K562 (cell line): ENCODE measurements at regions of chr14 and their contacts with region 1.

Region 1: GRCh38 chr14:31902002-31902401 is 175.1 kb upstream of the ARHGAP5 start:
- DNase-seq: peak; percentile 37 to 69 (median 53)
- ATAC-seq: peak; percentile 87
- H3K4me3 ChIP-seq: no peak overlapping the region
- H3K27ac ChIP-seq: peak overlapping the region; percentile 32; the same call in 2 of the 3 replicates
- H3K4me1 ChIP-seq: peaks cover 0 to 24% of the 10 kb centered on the region in 2 experiments; a peak in 2 of 5 replicates
- H3K27me3 ChIP-seq: no peaks in the 10 kb centered on the region
- CTCF ChIP-seq: no peak
- EP300 ChIP-seq: peak; percentile 49; the same call in 1 of the 2 replicates
- POLR2A ChIP-seq: no peak
- RAD21 ChIP-seq: no peak

Region 2: GRCh38 chr14:31530136-31530535 is 371.9 kb before region 1 on chr14:
- CTCF ChIA-PET with region 1: no interaction called
- POLR2A ChIA-PET with region 1: no interaction called
- in situ Hi-C with region 1: no loop called
- intact Hi-C with region 1: loop called (anchors 10 kb)
- DNase-seq: no peak
- ATAC-seq: no peak
- H3K4me3 ChIP-seq: no peak overlapping the region
- H3K27ac ChIP-seq: no peak overlapping the region
- H3K4me1 ChIP-seq: peaks cover 0 to 6% of the 10 kb centered on the region in 2 experiments; a peak in 2 of 5 replicates
- H3K27me3 ChIP-seq: no peaks in the 10 kb centered on the region; a peak in 1 of 5 replicates
- CTCF ChIP-seq: no peak
- EP300 ChIP-seq: no peak
- POLR2A ChIP-seq: no peak
- RAD21 ChIP-seq: no peak